ENCODE measurements at regions of chr11 and their contacts with region 1.

Region 1: DNA sequence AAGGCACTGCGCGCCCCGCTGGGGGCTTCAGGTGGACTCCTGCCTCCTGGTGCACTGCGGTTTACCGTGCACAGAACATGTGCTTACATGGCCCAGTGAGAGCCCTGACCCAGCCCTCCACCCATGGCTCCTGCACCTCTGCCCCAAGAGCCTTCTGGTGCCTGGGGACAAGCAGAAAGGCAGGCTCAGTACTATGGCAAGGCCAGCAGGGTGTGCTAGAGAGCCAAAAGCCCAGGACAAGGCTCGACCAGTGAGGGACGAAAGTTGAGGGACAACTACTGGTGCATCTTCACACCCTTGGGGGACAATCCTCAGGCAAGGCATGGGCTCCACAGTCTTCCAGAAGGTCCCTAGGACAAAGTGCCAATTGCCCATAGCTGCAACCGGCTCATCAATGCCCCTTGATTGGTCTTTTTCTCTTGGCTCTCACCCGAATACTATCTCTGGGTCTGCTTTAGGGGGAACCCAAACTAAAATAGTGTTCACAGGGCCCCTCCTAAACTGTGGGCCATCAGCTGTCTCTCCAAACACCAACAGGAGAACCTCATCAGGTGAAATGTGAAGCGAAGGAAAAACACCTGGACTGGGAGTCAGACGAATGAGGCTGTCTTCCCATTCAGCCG is 13.5 kb downstream of the PGA5 start:
- DNase-seq: peak; percentile 71
- H3K4me3 Mint-ChIP-seq: no peak overlapping the region
- H3K27ac Mint-ChIP-seq: no peak overlapping the region
- H3K4me1 Mint-ChIP-seq: no peaks in the 10 kb centered on the region
- H3K27me3 Mint-ChIP-seq: peaks cover 34% of the 10 kb centered on the region
- CTCF ChIP-seq: peak; percentile 89

Region 2: GRCh38 chr11:61270354-61271076 is 16.0 kb after region 1 on chr11:
- CTCF ChIA-PET with region 1: interaction called, 25 read pairs
- POLR2A ChIA-PET with region 1: interaction called, 3 read pairs
- intact Hi-C with region 1: no loop called
- DNase-seq: no peak
- H3K4me3 Mint-ChIP-seq: no peak overlapping the region
- H3K27ac Mint-ChIP-seq: no peak overlapping the region
- H3K4me1 Mint-ChIP-seq: no peaks in the 10 kb centered on the region
- H3K27me3 Mint-ChIP-seq: no peaks in the 10 kb centered on the region
- CTCF ChIP-seq: no peak

Region 3: GRCh38 chr11:61297746-61298145 is 43.2 kb after region 1 on chr11:
- CTCF ChIA-PET with region 1: interaction called, 28 read pairs
- POLR2A ChIA-PET with region 1: interaction called, 4 read pairs
- intact Hi-C with region 1: loop called (anchors 1 kb)
- DNase-seq: peak; percentile 96
- H3K4me3 Mint-ChIP-seq: peak overlapping the region; percentile 35
- H3K27ac Mint-ChIP-seq: peak overlapping the region; percentile 91
- H3K4me1 Mint-ChIP-seq: peaks cover 28% of the 10 kb centered on the region
- H3K27me3 Mint-ChIP-seq: peaks cover 13% of the 10 kb centered on the region
- CTCF ChIP-seq: no peak

Region 4: DNA sequence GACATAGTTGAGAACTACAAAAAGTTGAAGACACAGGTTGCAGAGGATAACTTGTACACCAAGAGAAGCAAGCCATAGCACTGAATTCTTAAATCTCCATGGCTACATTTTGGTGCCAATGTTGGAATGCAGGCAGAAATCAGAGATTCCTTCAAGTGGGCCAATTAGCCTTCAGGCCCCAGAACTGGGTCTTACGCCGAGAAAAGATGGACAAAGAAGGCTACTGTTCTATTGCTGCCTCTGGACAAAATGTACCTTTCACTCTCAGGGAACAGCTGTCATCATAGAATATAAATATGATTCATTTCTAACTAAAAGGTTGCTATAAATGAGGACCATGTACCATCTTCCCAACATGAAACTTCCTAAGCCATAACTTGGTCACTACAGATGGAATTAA is 151.6 kb after region 1 on chr11:
- CTCF ChIA-PET with region 1: no interaction called
- POLR2A ChIA-PET with region 1: no interaction called
- intact Hi-C with region 1: no loop called
- DNase-seq: no peak
- H3K4me3 Mint-ChIP-seq: no peak overlapping the region
- H3K27ac Mint-ChIP-seq: no peak overlapping the region
- H3K4me1 Mint-ChIP-seq: no peaks in the 10 kb centered on the region
- H3K27me3 Mint-ChIP-seq: no peaks in the 10 kb centered on the region
- CTCF ChIP-seq: no peak

Measured in MCF 10A (cell line).